ENCODE measurements at regions of chr3 and their contacts with region 1.

Region 1: DNA sequence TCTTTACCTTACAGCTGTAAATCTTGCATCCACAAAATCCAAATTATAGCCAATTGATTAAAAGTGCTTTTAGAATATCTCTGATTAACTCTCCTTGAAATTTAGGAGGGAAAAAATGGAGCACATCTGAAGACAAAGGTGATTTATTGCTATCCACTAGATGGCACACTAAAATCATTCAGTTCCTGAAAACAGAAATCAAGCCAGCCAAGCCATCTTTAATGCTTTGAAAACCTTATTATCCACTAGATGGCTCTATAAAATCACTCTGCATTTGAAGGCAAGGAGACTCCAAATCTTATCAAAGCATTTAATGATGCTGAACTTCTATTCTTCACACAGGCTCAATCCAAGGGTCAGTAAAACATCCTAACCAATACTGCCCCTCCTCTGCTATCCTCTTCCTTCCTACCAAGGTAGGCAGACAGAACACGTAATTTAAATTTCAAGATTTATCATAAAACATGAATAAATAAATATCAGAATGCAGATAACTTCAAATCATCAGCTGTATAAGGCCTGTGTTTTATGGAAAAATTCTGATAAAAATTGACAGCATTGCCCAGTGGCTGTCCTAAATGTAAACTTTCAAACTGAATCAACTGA is 48.4 kb downstream of the GOLIM4 start:
- DNase-seq: peak in 1 of 2 donors; percentile 61
- ATAC-seq: peak; percentile 87 to 93 (median 91)
- H3K4me3 ChIP-seq: no peak overlapping the region
- H3K4me3 Mint-ChIP-seq: no peak overlapping the region
- H3K27ac ChIP-seq: no peak overlapping the region
- H3K27ac Mint-ChIP-seq: no peak overlapping the region
- H3K4me1 ChIP-seq: no peaks in the 10 kb centered on the region
- H3K4me1 Mint-ChIP-seq: peaks cover 0 to 9% of the 10 kb centered on the region in 2 donors
- H3K27me3 ChIP-seq: no peaks in the 10 kb centered on the region
- H3K27me3 Mint-ChIP-seq: no peaks in the 10 kb centered on the region
- CTCF ChIP-seq: peak; percentile 87

Region 2: GRCh38 chr3:167978031-167978430 is 69.3 kb before region 1 on chr3:
- intact Hi-C with region 1: no loop called
- DNase-seq: no peak
- ATAC-seq: no peak
- H3K4me3 ChIP-seq: no peak overlapping the region
- H3K4me3 Mint-ChIP-seq: no peak overlapping the region
- H3K27ac ChIP-seq: no peak overlapping the region
- H3K27ac Mint-ChIP-seq: no peak overlapping the region
- H3K4me1 ChIP-seq: no peaks in the 10 kb centered on the region
- H3K4me1 Mint-ChIP-seq: no peaks in the 10 kb centered on the region
- H3K27me3 ChIP-seq: no peaks in the 10 kb centered on the region
- H3K27me3 Mint-ChIP-seq: no peaks in the 10 kb centered on the region
- CTCF ChIP-seq: no peak

Region 3: GRCh38 chr3:168095611-168096209 is 48.4 kb after region 1 on chr3 and contains the start of gene GOLIM4:
- intact Hi-C with region 1: loop called (anchors 2 kb)
- DNase-seq: peak; percentile 62 to 81
- ATAC-seq: peak; percentile 79 to 90 (median 80)
- H3K4me3 ChIP-seq: peak within 1 kb of the TSS; percentile 82
- H3K4me3 Mint-ChIP-seq: peak within 1 kb of the TSS; percentile 95
- H3K27ac ChIP-seq: peak within 1 kb of the TSS; percentile 85
- H3K27ac Mint-ChIP-seq: peak within 1 kb of the TSS; percentile 79 to 96
- H3K4me1 ChIP-seq: peaks cover 11% of the 10 kb centered on the region
- H3K4me1 Mint-ChIP-seq: peaks cover 22 to 29% of the 10 kb centered on the region in 2 donors
- H3K27me3 ChIP-seq: no peaks in the 10 kb centered on the region
- H3K27me3 Mint-ChIP-seq: peaks cover 0 to under 1% of the 10 kb centered on the region in 2 donors
- CTCF ChIP-seq: no peak
- total RNA-seq, gene GOLIM4: 13.7 to 17.9 (median 17.9) TPM

Region 4: GRCh38 chr3:168155303-168155702 is 108.0 kb after region 1 on chr3:
- intact Hi-C with region 1: no loop called
- DNase-seq: no peak
- ATAC-seq: no peak
- H3K4me3 ChIP-seq: no peak overlapping the region
- H3K4me3 Mint-ChIP-seq: no peak overlapping the region
- H3K27ac ChIP-seq: no peak overlapping the region
- H3K27ac Mint-ChIP-seq: no peak overlapping the region
- H3K4me1 ChIP-seq: no peaks in the 10 kb centered on the region
- H3K4me1 Mint-ChIP-seq: no peaks in the 10 kb centered on the region
- H3K27me3 ChIP-seq: no peaks in the 10 kb centered on the region
- H3K27me3 Mint-ChIP-seq: peaks cover 11 to 21% of the 10 kb centered on the region in 2 donors
- CTCF ChIP-seq: no peak

Region 5: DNA sequence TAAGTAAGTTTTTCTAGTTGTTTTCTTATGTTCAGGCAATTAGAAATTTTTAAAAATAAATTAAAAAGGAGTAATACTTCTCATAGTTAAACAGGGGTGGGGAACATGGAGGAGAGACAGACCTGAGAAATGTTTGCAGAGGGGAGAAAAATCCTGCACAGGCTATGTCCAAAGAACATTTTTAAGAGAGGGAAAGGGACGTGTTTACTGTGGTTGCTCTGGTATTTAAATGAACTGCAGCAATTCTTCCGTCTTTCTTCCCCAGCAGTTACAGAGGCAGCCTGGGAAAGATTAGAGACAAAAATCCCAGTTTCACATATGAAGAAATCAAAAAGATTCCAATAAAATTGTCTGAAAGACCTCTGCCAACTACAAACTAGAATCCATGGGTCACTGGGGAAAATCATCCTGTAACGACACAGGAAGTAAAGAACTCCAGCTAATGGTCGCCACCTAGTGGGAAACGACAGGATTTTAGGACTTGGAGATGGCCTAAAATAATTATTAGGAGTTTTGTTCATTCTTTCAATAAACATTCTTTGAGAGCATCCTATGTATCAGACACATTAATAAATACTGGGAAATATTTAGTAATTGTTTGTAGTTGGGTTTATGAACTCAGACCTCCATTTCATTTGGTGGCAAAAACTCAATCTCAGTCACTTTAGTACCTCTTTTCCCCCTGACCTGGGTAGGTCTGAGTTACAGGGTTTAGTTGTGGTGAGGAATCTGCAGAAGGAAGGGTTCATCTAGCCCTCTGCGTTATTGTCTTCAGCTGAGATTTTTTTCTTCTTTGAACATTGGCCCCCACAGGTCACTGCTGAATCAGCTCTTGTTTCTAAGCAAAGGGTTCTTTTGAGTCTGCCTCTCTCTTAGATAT is 118.3 kb after region 1 on chr3:
- intact Hi-C with region 1: loop called (anchors 1 kb)
- DNase-seq: peak in 1 of 2 donors; percentile 63
- ATAC-seq: peak in 2 of 3 donors; percentile 54 to 66
- H3K4me3 ChIP-seq: peak overlapping the region; percentile 19
- H3K4me3 Mint-ChIP-seq: peak overlapping the region; percentile 52
- H3K27ac ChIP-seq: no peak overlapping the region
- H3K27ac Mint-ChIP-seq: no peak overlapping the region
- H3K4me1 ChIP-seq: no peaks in the 10 kb centered on the region
- H3K4me1 Mint-ChIP-seq: peaks cover 12 to 18% of the 10 kb centered on the region in 2 donors
- H3K27me3 ChIP-seq: no peaks in the 10 kb centered on the region
- H3K27me3 Mint-ChIP-seq: peaks cover 0 to 4% of the 10 kb centered on the region in 2 donors
- CTCF ChIP-seq: peak; percentile 66

Region 6: DNA sequence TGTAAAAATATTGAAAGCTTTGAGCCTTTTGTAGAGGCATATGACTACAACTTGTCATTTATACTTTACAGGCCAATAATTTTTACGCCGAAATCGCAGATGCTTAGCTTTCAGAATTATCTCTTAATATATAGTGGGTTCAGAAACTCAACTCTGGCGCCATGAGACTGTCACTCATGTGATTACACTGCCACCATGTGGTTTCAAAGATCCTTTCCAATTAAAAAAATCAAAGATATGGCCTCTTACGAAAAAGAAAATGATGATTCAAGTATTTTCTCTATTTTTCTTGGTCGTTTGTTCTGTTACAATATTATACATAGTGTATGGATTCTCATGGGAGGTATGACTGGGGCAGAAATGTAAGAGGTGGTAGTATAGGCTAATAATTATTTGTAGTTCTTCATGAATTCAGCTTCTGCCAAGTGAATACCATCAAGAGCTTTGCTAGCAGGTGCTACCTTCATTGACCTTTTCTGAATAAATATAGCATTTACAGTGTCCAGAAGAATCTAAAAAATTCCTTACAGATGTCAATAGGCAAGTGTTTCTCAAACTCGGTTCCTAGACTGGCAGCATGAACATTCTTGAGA is 800.1 kb after region 1 on chr3:
- intact Hi-C with region 1: loop called (anchors 2 kb)
- DNase-seq: peak in 1 of 2 donors; percentile 11
- ATAC-seq: no peak
- H3K4me3 ChIP-seq: no peak overlapping the region
- H3K4me3 Mint-ChIP-seq: no peak overlapping the region
- H3K27ac ChIP-seq: no peak overlapping the region
- H3K27ac Mint-ChIP-seq: no peak overlapping the region
- H3K4me1 ChIP-seq: no peaks in the 10 kb centered on the region
- H3K4me1 Mint-ChIP-seq: no peaks in the 10 kb centered on the region
- H3K27me3 ChIP-seq: no peaks in the 10 kb centered on the region
- H3K27me3 Mint-ChIP-seq: peaks cover 4 to 8% of the 10 kb centered on the region in 2 donors
- CTCF ChIP-seq: no peak